A673 (cell line): ENCODE measurements at regions of chr6 and their contacts with region 1.

Region 1: DNA sequence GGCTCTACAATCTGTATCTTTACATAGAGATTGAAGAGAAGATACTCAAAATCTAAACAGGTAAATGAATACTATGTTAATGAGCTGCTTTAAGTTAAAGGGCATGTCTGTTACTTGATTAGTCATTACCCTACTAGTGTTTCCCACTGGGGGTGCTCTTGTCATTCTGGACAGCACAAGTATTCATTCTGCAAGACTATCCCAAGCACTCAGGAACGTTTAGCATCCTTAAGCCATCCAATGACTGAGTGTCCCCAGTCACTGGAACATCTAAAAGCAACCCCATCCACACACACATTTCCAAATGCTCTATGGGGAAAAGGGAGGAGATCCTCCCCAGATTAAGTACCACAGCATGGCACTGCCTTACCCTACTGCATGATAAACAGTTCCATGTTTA is 25.7 kb downstream of the EZR start:
- DNase-seq: peak; percentile 49
- H3K4me3 ChIP-seq: no peak overlapping the region
- H3K27ac ChIP-seq: no peak overlapping the region
- H3K4me1 ChIP-seq: peaks cover 15% of the 10 kb centered on the region
- H3K27me3 ChIP-seq: no peaks in the 10 kb centered on the region
- CTCF ChIP-seq: peak; percentile 39

Region 2: GRCh38 chr6:158972241-158973233 is 179.1 kb after region 1 on chr6:
- CTCF ChIA-PET with region 1: no interaction called
- POLR2A ChIA-PET with region 1: no interaction called
- intact Hi-C with region 1: loop called (anchors 5 kb)
- DNase-seq: peak; percentile 67
- H3K4me3 ChIP-seq: no peak overlapping the region
- H3K27ac ChIP-seq: no peak overlapping the region
- H3K4me1 ChIP-seq: no peaks in the 10 kb centered on the region
- H3K27me3 ChIP-seq: no peaks in the 10 kb centered on the region
- CTCF ChIP-seq: peak; percentile 66; the same call in 1 of the 2 replicates

Region 3: DNA sequence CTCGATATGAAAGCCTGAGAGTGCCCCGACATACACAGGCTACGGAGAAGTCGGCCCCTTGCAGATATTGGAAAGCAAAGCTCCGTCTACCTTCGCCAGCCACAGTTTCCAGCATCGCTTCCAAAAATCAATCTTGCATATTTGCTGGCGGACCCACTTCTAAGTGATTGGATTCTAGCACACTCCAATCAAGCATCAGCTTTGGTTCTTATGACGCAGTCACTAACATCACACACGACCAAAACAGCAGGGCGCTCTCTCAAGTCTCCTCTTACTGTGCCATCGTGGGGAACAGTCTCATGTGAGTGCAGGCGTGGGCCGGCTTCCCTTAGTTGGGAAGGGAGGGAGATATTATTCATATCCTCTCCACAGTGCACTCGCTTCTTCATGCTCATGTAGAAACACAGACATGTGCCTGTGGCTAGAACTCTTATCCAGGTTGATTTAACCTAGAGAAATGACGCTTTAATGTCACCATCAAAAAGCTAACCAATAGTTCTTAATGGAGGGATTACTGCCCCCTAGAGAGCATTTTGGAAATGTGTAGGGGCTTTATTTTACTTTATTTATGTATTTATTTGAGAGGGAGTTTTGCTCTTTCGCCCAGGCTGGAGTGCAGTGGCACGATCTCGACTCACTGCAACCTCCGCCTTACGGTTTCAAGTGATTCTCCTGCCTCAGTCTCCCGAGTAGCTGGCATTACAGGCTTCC is 669.8 kb after region 1 on chr6:
- CTCF ChIA-PET with region 1: no interaction called
- POLR2A ChIA-PET with region 1: no interaction called
- intact Hi-C with region 1: no loop called
- DNase-seq: peak; percentile 51
- H3K4me3 ChIP-seq: no peak overlapping the region
- H3K27ac ChIP-seq: no peak overlapping the region
- H3K4me1 ChIP-seq: no peaks in the 10 kb centered on the region
- H3K27me3 ChIP-seq: no peaks in the 10 kb centered on the region
- CTCF ChIP-seq: peak; percentile 53

Region 4: DNA sequence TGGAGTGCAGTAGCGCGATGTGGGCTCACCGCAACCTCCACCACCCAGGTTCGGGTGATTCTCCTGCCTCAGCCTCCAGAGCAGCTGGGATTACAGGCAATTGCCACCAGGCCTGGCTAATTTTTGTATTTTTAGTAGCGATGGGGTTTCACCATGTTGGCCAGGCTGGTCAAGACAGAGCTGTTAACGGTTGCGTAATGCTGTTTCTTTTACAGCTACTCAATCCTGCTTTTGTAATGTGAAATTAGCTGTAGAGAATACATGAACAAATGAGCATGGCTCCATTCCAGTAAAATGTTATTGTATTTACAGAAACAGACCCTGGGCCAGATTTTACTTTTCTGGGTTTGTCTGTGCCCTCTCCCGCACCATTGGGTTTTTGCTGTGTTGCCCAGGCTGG is 1008.5 kb after region 1 on chr6:
- CTCF ChIA-PET with region 1: no interaction called
- POLR2A ChIA-PET with region 1: no interaction called
- intact Hi-C with region 1: no loop called
- DNase-seq: no peak
- H3K4me3 ChIP-seq: no peak overlapping the region
- H3K27ac ChIP-seq: no peak overlapping the region
- H3K4me1 ChIP-seq: no peaks in the 10 kb centered on the region
- H3K27me3 ChIP-seq: no peaks in the 10 kb centered on the region
- CTCF ChIP-seq: no peak